CD4-positive, alpha-beta memory T cell (primary cell): ENCODE measurements at regions of chr22 and their contacts with region 1.

Region 1: DNA sequence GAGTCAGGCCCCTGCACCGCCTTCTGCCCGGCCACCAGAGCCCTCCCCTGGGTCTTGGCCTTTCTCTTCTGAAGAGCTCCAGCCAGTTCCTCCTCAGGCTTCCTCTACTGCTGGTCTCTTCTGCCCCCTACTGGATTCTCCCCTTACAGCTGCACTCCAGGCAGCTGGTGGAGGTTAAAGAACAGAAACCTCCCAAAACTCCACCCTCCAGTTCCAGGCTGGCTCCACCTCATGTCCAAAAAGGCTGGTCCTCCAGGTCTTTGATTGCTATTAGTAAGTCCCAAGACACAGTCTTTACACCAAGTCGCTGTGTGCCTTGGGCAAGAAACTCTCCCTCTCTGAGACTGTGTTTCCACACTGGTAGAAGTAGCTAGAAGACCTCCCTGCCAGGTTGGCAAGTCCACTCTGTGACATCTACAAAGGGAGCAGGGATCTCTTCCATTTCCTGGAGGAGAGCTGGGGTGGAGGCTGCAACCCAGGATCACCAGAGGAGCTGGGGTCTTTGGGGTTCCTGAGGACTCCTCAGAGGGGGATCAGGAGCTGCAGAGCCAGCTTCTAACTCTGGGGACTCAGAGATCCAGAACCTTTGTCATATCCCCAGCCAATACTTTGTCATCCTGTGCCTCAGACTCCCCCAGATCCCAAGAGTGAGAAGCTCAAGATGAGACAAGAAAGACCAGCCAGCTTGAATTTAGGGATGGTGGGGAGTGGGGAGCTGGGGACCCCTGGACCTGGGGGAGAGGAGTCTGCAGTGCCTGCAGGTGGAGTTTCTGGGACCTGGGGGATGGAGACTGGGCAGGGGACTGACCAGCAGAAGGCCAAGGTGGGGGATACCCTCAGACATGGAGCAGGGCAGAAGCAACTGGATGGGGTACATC is 3.4 kb upstream of the IGLL5 start:
- DNase-seq: peak; percentile 64 to 77 (median 71)
- H3K4me3 ChIP-seq: no peak overlapping the region
- H3K4me3 Mint-ChIP-seq: no peak overlapping the region
- H3K27ac ChIP-seq: no peak overlapping the region
- H3K27ac Mint-ChIP-seq: peak overlapping the region in 4 of 7 donors; percentile 13 to 54 (median 29)
- H3K4me1 ChIP-seq: no peaks in the 10 kb centered on the region
- H3K4me1 Mint-ChIP-seq: peaks cover 0 to 3% (median under 1%) of the 10 kb centered on the region in 4 donors
- H3K27me3 ChIP-seq: no peaks in the 10 kb centered on the region
- H3K27me3 Mint-ChIP-seq: peaks cover 2 to 11% of the 10 kb centered on the region in 2 donors

Region 2: GRCh38 chr22:21982338-21982965 is 901.8 kb before region 1 on chr22 and contains the start of gene TOP3B:
- CTCF ChIA-PET with region 1: no interaction called
- POLR2A ChIA-PET with region 1: no interaction called
- intact Hi-C with region 1: no loop called
- DNase-seq: peak; percentile 74 to 76 (median 75)
- H3K4me3 ChIP-seq: peak within 1 kb of the TSS; percentile 77 to 81
- H3K4me3 Mint-ChIP-seq: peak within 1 kb of the TSS; percentile 88 to 93 (median 90)
- H3K27ac ChIP-seq: peak within 1 kb of the TSS; percentile 68
- H3K27ac Mint-ChIP-seq: peak within 1 kb of the TSS; percentile 81 to 92 (median 86)
- H3K4me1 ChIP-seq: peaks cover 17% of the 10 kb centered on the region
- H3K4me1 Mint-ChIP-seq: peaks cover 22 to 50% (median 35%) of the 10 kb centered on the region in 4 donors
- H3K27me3 ChIP-seq: no peaks in the 10 kb centered on the region
- H3K27me3 Mint-ChIP-seq: no peaks in the 10 kb centered on the region
- total RNA-seq, gene TOP3B: 78.1 to 81.1 TPM

Region 3: DNA sequence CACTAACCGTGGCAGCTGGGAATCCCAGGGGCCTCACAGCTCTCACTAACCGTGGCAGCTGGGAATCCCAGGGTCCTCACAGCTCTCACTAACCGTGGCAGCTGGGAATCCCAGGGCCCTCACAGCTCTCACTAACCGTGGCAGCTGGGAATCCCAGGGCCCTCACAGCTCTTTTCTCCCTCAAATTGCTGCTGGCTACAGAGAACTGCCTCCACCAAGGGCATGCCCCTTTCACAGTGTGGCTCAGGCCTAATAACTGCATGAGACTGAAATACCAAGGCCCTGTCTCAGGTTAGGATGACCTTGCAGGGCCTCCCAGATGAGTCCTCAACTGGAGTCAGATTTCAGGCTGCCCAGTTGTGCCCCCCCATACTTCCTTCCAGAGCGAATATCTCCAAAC is 275.0 kb before region 1 on chr22:
- CTCF ChIA-PET with region 1: no interaction called
- POLR2A ChIA-PET with region 1: no interaction called
- intact Hi-C with region 1: no loop called
- DNase-seq: no peak
- H3K4me3 ChIP-seq: no peak overlapping the region
- H3K4me3 Mint-ChIP-seq: no peak overlapping the region
- H3K27ac ChIP-seq: no peak overlapping the region
- H3K27ac Mint-ChIP-seq: peak overlapping the region in 1 of 7 donors; percentile 1
- H3K4me1 ChIP-seq: no peaks in the 10 kb centered on the region
- H3K4me1 Mint-ChIP-seq: peaks cover 0 to 8% (median 2%) of the 10 kb centered on the region in 4 donors
- H3K27me3 ChIP-seq: no peaks in the 10 kb centered on the region
- H3K27me3 Mint-ChIP-seq: peaks cover 0 to 1% of the 10 kb centered on the region in 2 donors

Region 4: GRCh38 chr22:22692707-22693530 is 191.3 kb before region 1 on chr22:
- CTCF ChIA-PET with region 1: interaction called, 57 read pairs
- POLR2A ChIA-PET with region 1: no interaction called
- intact Hi-C with region 1: no loop called
- DNase-seq: peak; percentile 52 to 61 (median 54)
- H3K4me3 ChIP-seq: no peak overlapping the region
- H3K4me3 Mint-ChIP-seq: no peak overlapping the region
- H3K27ac ChIP-seq: no peak overlapping the region
- H3K27ac Mint-ChIP-seq: peak overlapping the region in 2 of 7 donors; percentile 27 to 29
- H3K4me1 ChIP-seq: no peaks in the 10 kb centered on the region
- H3K4me1 Mint-ChIP-seq: peaks cover 0 to 5% (median 0%) of the 10 kb centered on the region in 4 donors
- H3K27me3 ChIP-seq: no peaks in the 10 kb centered on the region
- H3K27me3 Mint-ChIP-seq: no peaks in the 10 kb centered on the region

Region 5: GRCh38 chr22:22720201-22720723 is 164.0 kb before region 1 on chr22:
- CTCF ChIA-PET with region 1: interaction called, 35 read pairs
- POLR2A ChIA-PET with region 1: interaction called, 3 read pairs
- intact Hi-C with region 1: no loop called
- DNase-seq: peak in 4 of 5 donors; percentile 25 to 46 (median 39)
- H3K4me3 ChIP-seq: no peak overlapping the region
- H3K4me3 Mint-ChIP-seq: no peak overlapping the region
- H3K27ac ChIP-seq: no peak overlapping the region
- H3K27ac Mint-ChIP-seq: peak overlapping the region in 6 of 7 donors; percentile 3 to 88 (median 56)
- H3K4me1 ChIP-seq: peaks cover 9% of the 10 kb centered on the region
- H3K4me1 Mint-ChIP-seq: peaks cover 15 to 33% (median 21%) of the 10 kb centered on the region in 4 donors
- H3K27me3 ChIP-seq: no peaks in the 10 kb centered on the region
- H3K27me3 Mint-ChIP-seq: no peaks in the 10 kb centered on the region

Region 6: DNA sequence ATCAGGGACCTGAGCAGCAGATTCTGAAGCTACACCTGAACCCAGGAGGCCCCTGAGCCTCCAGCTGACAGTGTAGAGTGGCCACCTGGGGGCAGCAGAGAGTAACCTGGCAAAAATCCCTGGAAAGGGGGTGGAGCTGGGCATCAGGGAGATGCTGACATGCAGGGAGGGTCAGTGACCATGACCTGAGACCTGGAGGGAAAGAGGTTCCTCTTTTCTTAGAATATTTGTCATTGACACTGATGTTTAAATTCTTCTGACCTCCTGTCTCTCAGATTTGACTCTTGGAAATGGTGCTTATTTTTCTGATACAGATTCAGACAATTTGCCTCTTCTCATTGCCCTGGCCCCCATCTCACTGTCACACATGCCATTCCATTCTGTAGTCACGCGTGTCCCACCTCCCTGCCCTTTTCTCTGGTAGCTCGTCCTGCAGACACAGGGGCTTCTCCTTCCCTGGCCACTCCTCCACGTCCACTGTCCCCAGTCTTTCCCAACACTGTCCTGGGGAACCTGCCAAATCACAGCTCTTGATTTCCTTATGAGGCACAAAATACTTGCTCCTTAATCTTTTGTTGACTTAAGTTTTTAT is 113.9 kb before region 1 on chr22:
- CTCF ChIA-PET with region 1: interaction called, 53 read pairs
- POLR2A ChIA-PET with region 1: interaction called, 3 read pairs
- intact Hi-C with region 1: no loop called
- DNase-seq: peak; percentile 20 to 46 (median 30)
- H3K4me3 ChIP-seq: no peak overlapping the region
- H3K4me3 Mint-ChIP-seq: no peak overlapping the region
- H3K27ac ChIP-seq: no peak overlapping the region
- H3K27ac Mint-ChIP-seq: peak overlapping the region in 5 of 7 donors; percentile 2 to 72 (median 23)
- H3K4me1 ChIP-seq: no peaks in the 10 kb centered on the region
- H3K4me1 Mint-ChIP-seq: peaks cover 10 to 28% (median 19%) of the 10 kb centered on the region in 4 donors
- H3K27me3 ChIP-seq: no peaks in the 10 kb centered on the region
- H3K27me3 Mint-ChIP-seq: peaks cover 3 to 4% of the 10 kb centered on the region in 2 donors

Region 7: DNA sequence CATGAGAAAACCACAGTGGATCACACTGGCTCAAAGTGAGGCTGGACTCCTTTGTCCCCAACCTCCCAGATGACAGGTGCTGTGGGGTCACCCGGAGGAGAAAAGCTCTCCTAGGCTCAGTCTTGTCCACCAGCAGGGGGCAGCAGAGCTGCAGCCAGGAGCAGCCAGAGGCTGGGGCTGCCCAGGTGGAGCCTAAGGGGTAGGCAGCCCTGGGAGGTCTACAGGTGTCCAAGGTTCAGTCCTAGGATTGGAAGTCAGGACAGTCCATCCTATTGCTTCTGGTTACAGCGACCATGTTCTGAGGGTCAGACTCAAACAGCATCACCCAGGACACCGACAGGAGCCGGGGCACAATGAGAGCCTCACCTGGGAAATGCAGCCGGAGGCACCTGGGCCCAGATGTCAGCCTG is 74.2 kb before region 1 on chr22:
- CTCF ChIA-PET with region 1: interaction called, 431 read pairs
- POLR2A ChIA-PET with region 1: interaction called, 27 read pairs
- intact Hi-C with region 1: loop called (anchors 1 kb)
- DNase-seq: peak; percentile 76 to 82 (median 76)
- H3K4me3 ChIP-seq: no peak overlapping the region
- H3K4me3 Mint-ChIP-seq: peak overlapping the region in 4 of 8 donors; percentile 12 to 53 (median 44)
- H3K27ac ChIP-seq: no peak overlapping the region
- H3K27ac Mint-ChIP-seq: peak overlapping the region in 6 of 7 donors; percentile 67 to 91 (median 80)
- H3K4me1 ChIP-seq: peaks cover 26% of the 10 kb centered on the region
- H3K4me1 Mint-ChIP-seq: peaks cover 40 to 79% (median 57%) of the 10 kb centered on the region in 4 donors
- H3K27me3 ChIP-seq: no peaks in the 10 kb centered on the region
- H3K27me3 Mint-ChIP-seq: no peaks in the 10 kb centered on the region

Region 8: DNA sequence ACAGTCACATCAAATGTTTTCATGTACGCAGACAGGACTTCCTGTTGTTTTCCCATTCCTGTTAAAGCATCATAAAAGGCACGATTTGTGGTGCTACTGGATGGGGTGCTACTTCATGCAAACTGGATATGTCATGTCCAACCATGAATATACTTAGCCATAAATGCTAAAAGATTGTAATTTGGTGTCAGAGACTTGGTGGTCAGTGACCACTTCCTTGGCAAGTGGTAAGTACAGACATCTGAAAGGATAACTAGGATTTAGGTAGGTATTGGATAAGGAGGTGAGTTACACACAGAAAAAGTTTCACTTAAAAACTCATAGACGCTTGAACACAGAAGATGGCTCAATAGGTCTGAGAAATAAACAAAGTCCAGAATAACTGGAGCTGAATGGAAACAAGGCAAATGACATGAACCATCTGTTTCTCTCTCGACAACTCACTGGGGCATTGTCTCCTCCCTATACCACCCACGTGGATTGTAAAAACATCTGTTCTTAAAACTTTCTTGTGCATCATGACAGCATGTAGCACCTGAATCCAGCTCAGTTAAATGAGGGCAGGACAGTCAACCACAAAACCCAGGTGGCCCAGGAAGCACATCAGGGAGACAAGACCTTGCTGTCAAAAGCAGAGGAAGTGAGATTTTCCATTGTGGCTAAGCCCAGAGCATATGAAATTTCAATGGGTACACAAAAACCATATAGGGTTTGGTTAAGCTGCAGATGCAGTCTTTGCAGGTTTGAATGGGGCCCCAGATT is 18.8 kb before region 1 on chr22:
- CTCF ChIA-PET with region 1: interaction called, 11 read pairs
- POLR2A ChIA-PET with region 1: no interaction called
- intact Hi-C with region 1: no loop called
- DNase-seq: peak; percentile 53 to 71 (median 59)
- H3K4me3 ChIP-seq: no peak overlapping the region
- H3K4me3 Mint-ChIP-seq: peak overlapping the region in 7 of 8 donors; percentile 33 to 67 (median 51)
- H3K27ac ChIP-seq: no peak overlapping the region
- H3K27ac Mint-ChIP-seq: peak overlapping the region; percentile 50 to 95 (median 83)
- H3K4me1 ChIP-seq: peaks cover 35% of the 10 kb centered on the region
- H3K4me1 Mint-ChIP-seq: peaks cover 35 to 55% (median 41%) of the 10 kb centered on the region in 4 donors
- H3K27me3 ChIP-seq: no peaks in the 10 kb centered on the region
- H3K27me3 Mint-ChIP-seq: no peaks in the 10 kb centered on the region

Region 9: DNA sequence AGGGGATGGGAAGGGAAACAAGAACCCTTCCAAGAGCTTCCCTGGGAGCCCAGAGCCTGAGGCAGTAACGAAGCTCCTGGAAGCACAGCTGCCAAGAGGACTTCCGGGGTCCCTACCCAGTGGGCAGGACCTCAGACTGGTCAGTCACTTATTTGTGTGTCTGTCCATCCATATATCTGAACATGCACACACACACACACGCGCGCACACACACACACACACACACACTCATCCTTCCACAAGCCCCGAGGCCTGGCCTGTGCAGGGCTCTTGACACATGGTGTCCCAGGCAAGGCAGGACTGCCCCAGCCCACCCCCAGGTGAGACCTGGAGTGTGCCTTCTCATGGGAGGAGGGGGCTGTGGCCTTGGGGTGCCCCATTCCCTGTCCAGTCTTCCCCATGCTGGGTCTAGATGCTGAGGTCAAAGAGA is 48.3 kb after region 1 on chr22:
- CTCF ChIA-PET with region 1: no interaction called
- POLR2A ChIA-PET with region 1: no interaction called
- intact Hi-C with region 1: no loop called
- DNase-seq: no peak
- H3K4me3 ChIP-seq: no peak overlapping the region
- H3K4me3 Mint-ChIP-seq: no peak overlapping the region
- H3K27ac ChIP-seq: no peak overlapping the region
- H3K27ac Mint-ChIP-seq: no peak overlapping the region
- H3K4me1 ChIP-seq: peaks cover 12% of the 10 kb centered on the region
- H3K4me1 Mint-ChIP-seq: peaks cover 8 to 27% (median 17%) of the 10 kb centered on the region in 4 donors
- H3K27me3 ChIP-seq: no peaks in the 10 kb centered on the region
- H3K27me3 Mint-ChIP-seq: no peaks in the 10 kb centered on the region